Mammary epithelial cell (primary cell): ENCODE measurements at regions of chr5 and their contacts with region 1.

Region 1: GRCh38 chr5:73482383-73483136 is 15.7 kb upstream of the BTF3 start:
- DNase-seq: no peak
- H3K4me3 ChIP-seq: no peak overlapping the region
- H3K27ac ChIP-seq: no peak overlapping the region
- H3K4me1 ChIP-seq: no peaks in the 10 kb centered on the region
- H3K27me3 ChIP-seq: peaks cover 3% of the 10 kb centered on the region
- CTCF ChIP-seq: no peak

Region 2: DNA sequence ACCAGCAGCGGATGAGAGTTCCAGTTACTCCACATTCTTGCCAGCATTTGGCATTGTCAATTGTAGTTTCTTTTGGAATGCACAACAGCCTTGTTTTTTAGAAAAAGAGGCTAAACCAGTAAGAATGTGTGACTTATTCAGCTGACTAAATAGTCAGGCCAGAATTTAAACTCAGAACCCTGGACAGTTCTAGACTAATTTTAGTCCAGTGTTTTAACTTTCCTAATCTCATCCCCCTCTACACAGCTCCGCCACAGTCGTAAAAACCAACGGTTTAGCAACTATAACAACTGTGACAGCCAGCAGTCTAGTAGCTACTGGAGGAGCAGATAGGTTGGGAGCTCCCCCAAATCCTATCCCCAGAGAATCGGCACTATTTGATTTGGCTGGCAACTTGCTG is 137.7 kb before region 1 on chr5:
- CTCF ChIA-PET with region 1: interaction called, 15 read pairs
- dilution Hi-C with region 1: no loop called
- in situ Hi-C with region 1: no loop called
- intact Hi-C with region 1: no loop called
- DNase-seq: no peak
- H3K4me3 ChIP-seq: no peak overlapping the region
- H3K27ac ChIP-seq: no peak overlapping the region
- H3K4me1 ChIP-seq: no peaks in the 10 kb centered on the region
- H3K27me3 ChIP-seq: no peaks in the 10 kb centered on the region
- CTCF ChIP-seq: no peak

Region 3: DNA sequence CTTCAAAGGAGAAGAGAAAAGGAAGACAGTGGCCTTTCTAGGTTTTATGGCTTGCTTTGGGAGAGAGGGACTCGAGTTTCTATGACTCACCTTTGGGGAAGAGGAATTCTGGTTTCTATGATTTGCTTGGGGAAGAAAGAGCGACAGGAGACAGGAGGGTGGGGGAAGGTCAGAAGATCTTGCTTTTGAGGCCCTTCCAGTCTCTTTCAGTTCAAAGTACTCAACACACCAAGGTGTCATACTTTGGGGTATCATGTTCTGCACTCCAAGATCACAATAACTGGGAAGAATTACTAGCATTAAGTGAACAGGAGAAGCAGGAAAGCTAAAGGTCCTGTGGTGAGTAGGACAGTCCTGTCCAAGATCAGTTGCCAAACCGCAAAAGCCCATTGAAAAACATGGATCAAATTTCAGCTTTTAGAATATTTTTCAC is 467.9 kb after region 1 on chr5:
- CTCF ChIA-PET with region 1: no interaction called
- dilution Hi-C with region 1: no loop called
- in situ Hi-C with region 1: no loop called
- intact Hi-C with region 1: no loop called
- DNase-seq: peak; percentile 46
- H3K4me3 ChIP-seq: no peak overlapping the region
- H3K27ac ChIP-seq: no peak overlapping the region
- H3K4me1 ChIP-seq: peaks cover 10% of the 10 kb centered on the region
- H3K27me3 ChIP-seq: no peaks in the 10 kb centered on the region
- CTCF ChIP-seq: no peak